CD4-positive, alpha-beta T cell (primary cell): ENCODE measurements at regions of chr17 and their contacts with region 1.

Region 1: DNA sequence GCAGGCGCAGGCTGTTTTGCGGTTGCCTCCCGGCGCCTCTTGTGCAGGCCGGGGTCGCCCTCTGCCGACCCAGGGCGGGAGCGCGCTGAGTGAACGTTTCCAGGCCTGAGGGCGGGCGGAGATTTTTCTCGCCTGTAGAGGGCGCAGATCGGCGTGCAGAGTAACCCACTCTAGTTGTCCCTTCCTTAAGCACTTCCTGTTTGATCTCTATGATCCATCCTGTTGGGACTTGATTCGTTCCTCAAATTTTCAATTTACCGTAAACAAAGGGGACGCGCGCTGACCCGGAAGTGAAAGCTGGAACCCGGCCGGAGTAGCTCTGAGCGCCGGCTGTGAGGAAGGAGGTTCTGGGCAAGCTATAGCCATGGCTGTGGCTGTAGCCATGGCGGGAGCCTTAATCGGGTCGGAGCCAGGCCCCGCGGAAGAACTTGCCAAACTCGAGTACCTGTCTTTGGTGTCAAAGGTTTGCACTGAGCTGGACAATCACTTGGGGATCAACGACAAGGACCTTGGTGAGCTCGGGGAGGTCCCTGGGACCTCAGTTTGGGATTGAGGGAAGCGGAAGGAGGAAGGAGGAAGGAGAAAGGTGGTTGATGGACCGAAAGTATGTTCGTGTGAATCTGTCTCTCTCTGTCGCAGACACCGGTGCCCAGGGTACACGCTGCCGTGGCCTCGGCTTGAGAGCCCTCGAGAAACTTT is at the start of gene DHX8:
- DNase-seq: peak; percentile 95 to 99 (median 99)
- ATAC-seq: peak; percentile 97
- H3K4me3 ChIP-seq: peak within 1 kb of the TSS; percentile 88
- H3K4me3 Mint-ChIP-seq: peak within 1 kb of the TSS; percentile 99
- H3K27ac ChIP-seq: peak within 1 kb of the TSS; percentile 37 to 70
- H3K27ac Mint-ChIP-seq: peak within 1 kb of the TSS; percentile 96
- H3K4me1 ChIP-seq: peaks cover 29% of the 10 kb centered on the region
- H3K4me1 Mint-ChIP-seq: peaks cover 36% of the 10 kb centered on the region
- H3K27me3 ChIP-seq: no peaks in the 10 kb centered on the region
- H3K27me3 Mint-ChIP-seq: no peaks in the 10 kb centered on the region
- CTCF ChIP-seq: peak; percentile 100
- total RNA-seq, gene DHX8: 88.8 to 106 TPM

Region 2: DNA sequence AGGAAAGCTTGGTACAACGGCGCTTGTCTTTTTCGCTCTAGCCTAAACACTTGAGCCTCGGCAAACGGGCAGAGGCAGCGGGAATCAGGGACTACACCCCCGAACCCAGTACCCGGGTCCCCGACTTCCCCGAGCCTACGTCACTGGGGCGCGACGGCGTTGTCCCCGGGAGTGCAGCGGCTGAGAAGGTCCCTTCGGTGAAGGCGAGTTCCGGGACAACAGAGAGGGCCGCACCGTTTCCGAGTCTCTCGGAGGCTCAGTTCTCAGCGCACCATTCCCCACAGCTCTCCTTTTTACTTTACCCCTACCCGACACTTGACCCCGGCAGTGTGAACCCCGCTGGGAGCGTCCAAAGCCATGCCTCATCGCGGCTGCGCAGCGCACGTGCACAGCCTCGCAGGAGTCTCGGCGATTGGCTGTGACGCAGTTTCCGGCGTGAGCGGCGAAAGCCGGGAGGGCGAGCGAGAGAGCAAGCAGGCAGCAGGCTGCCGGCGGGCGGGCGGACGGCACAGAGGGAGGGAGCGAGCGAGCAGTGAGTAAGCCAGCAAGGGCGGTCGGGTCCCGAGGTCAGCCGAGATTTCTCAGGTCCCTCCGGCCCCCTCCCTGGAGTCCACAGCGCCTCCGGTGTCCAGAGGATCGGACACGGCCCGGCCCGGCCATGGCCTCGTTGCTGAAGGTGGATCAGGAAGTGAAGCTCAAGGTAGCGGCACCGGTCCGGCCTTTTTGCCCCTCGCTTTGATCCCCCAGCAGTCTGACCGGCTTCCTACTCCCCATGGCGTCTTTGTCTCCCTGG is 650.7 kb before region 1 on chr17 and contains the start of gene PSME3:
- CTCF ChIA-PET with region 1: interaction called, 3 read pairs
- POLR2A ChIA-PET with region 1: interaction called, 4 read pairs
- intact Hi-C with region 1: loop called in 1 of 2 experiments (anchors 5 kb)
- DNase-seq: peak; percentile 76 to 95 (median 86)
- ATAC-seq: peak; percentile 87
- H3K4me3 ChIP-seq: peak within 1 kb of the TSS; percentile 93
- H3K4me3 Mint-ChIP-seq: peak within 1 kb of the TSS; percentile 95
- H3K27ac ChIP-seq: peak within 1 kb of the TSS; percentile 86 to 88
- H3K27ac Mint-ChIP-seq: peak within 1 kb of the TSS; percentile 98
- H3K4me1 ChIP-seq: peaks cover 24% of the 10 kb centered on the region
- H3K4me1 Mint-ChIP-seq: peaks cover 27% of the 10 kb centered on the region
- H3K27me3 ChIP-seq: no peaks in the 10 kb centered on the region
- H3K27me3 Mint-ChIP-seq: no peaks in the 10 kb centered on the region
- CTCF ChIP-seq: no peak
- total RNA-seq, gene PSME3: 62.1 to 62.5 TPM

Region 3: DNA sequence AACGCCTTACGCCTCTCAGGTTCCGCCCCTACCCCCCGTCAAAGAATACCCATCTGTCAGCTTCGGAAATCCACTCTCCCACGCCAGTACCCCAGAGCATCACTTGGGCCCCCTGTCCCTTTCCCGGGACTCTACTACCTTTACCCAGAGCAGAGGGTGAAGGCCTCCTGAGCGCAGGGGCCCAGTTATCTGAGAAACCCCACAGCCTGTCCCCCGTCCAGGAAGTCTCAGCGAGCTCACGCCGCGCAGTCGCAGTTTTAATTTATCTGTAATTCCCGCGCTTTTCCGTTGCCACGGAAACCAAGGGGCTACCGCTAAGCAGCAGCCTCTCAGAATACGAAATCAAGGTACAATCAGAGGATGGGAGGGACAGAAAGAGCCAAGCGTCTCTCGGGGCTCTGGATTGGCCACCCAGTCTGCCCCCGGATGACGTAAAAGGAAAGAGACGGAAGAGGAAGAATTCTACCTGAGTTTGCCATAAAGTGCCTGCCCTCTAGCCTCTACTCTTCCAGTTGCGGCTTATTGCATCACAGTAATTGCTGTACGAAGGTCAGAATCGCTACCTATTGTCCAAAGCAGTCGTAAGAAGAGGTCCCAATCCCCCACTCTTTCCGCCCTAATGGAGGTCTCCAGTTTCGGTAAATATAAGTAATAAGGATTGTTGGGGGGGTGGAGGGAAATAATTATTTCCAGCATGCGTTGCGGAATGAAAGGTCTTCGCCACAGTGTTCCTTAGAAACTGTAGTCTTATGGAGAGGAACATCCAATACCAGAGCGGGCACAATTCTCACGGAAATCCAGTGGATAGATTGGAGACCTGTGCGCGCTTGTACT is 358.5 kb before region 1 on chr17 and contains the start of gene BRCA1:
- CTCF ChIA-PET with region 1: interaction called, 6 read pairs
- POLR2A ChIA-PET with region 1: interaction called, 3 read pairs
- intact Hi-C with region 1: loop called in 1 of 2 experiments (anchors 2 kb)
- DNase-seq: peak; percentile 86 to 99 (median 90)
- ATAC-seq: peak; percentile 99
- H3K4me3 ChIP-seq: peak within 1 kb of the TSS; percentile 77
- H3K4me3 Mint-ChIP-seq: peak within 1 kb of the TSS; percentile 86
- H3K27ac ChIP-seq: peak within 1 kb of the TSS; percentile 55 to 83
- H3K27ac Mint-ChIP-seq: peak within 1 kb of the TSS; percentile 71
- H3K4me1 ChIP-seq: peaks cover 18% of the 10 kb centered on the region
- H3K4me1 Mint-ChIP-seq: peaks cover 23% of the 10 kb centered on the region
- H3K27me3 ChIP-seq: no peaks in the 10 kb centered on the region
- H3K27me3 Mint-ChIP-seq: no peaks in the 10 kb centered on the region
- CTCF ChIP-seq: no peak
- total RNA-seq, gene BRCA1: 1.2 to 1.3 TPM

Region 4: DNA sequence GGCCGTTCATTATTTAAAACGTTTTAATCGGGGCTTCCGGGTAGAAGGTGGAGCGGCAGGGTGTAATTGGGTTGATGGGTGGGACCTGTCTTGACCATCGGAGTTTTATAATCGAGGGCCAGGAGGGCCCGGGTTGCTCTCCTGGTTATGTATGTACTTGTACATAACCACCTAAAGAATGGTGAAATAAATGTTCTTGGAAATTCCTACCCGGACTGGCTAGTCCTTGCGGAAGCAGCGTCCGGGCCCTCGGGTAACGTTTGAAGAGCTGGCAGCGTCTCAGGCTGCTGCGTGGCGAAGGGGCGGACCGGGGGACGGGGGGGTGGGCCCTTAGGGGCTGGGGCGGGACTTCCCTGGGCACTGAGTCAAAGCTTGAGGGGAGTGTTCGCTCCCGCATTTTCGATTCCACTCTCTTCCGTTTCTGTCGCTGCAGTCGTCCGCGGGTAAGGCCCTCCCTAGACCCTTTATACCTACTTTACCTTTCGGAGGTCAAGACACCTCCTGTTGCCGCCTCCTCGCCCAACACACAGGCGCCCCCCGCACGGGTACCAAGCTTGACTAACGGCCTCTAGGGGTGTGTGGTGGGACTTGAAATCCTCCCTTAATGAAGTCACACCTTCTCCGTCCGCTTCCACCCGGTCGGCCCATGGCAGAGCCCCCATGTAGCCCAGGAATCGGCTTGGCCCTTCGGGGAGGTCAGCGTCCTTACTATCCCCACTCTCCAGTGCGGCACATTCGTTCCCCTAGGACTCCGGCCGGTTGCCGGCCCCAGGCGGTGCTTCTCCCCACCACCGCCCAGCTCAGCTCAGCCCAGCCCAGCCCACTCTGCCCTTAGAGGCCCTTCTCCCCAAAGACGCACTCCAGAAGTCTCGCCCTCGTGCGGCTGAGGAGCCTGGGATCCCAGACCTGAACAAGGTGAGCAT is 272.1 kb before region 1 on chr17 and contains the start of gene TMEM106A:
- CTCF ChIA-PET with region 1: no interaction called
- POLR2A ChIA-PET with region 1: interaction called, 3 read pairs
- intact Hi-C with region 1: loop called in 1 of 2 experiments (anchors 2 kb)
- DNase-seq: peak; percentile 56 to 88 (median 68)
- ATAC-seq: peak; percentile 90
- H3K4me3 ChIP-seq: peak within 1 kb of the TSS; percentile 69
- H3K4me3 Mint-ChIP-seq: peak within 1 kb of the TSS; percentile 98
- H3K27ac ChIP-seq: peak within 1 kb of the TSS; percentile 72 to 77
- H3K27ac Mint-ChIP-seq: peak within 1 kb of the TSS; percentile 89
- H3K4me1 ChIP-seq: peaks cover 22% of the 10 kb centered on the region
- H3K4me1 Mint-ChIP-seq: peaks cover 38% of the 10 kb centered on the region
- H3K27me3 ChIP-seq: no peaks in the 10 kb centered on the region
- H3K27me3 Mint-ChIP-seq: no peaks in the 10 kb centered on the region
- CTCF ChIP-seq: peak; percentile 61
- total RNA-seq, gene TMEM106A: 6.3 to 6.4 TPM

Region 5: DNA sequence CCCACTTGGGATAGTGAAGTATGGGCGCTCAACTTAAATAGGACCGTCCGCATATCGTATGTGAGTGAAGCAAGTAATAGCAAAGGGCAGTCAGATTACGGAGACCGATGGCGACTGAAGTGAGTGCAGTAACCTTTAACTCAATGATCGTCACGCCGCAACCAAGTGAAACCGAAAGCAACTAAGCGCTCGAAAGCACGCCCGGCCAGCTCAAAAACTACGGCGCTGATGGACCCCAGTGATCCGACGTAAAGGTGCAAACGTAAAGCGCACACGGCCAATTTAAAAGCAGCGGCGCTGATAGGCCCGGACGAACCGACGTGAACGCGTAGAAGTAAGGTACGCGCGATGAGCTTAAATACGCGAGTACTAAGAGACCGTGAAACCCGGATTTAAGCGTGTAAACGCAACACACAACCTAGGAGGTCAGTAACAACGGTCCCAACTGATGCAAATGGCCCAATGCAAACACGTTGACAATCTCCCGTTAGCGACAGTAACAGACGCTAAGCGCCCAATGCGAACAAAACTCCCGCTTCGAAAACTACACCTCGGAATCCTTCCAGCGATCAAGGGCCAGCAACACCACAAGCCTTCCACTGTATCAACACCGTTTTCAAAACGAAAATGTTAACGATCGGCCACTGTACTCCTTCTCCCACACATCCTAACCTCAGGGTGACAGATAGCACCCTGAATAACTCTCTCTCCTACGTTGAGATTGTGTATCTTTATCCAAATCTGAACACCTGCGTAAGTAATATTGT is 122.9 kb before region 1 on chr17:
- CTCF ChIA-PET with region 1: interaction called, 20 read pairs
- POLR2A ChIA-PET with region 1: interaction called, 60 read pairs
- intact Hi-C with region 1: no loop called
- DNase-seq: peak; percentile 74 to 99 (median 86)
- ATAC-seq: peak; percentile 75
- H3K4me3 ChIP-seq: peak overlapping the region; percentile 63
- H3K4me3 Mint-ChIP-seq: peak overlapping the region; percentile 93
- H3K27ac ChIP-seq: peak overlapping the region; percentile 94 to 96
- H3K27ac Mint-ChIP-seq: peak overlapping the region; percentile 97
- H3K4me1 ChIP-seq: peaks cover 22% of the 10 kb centered on the region
- H3K4me1 Mint-ChIP-seq: peaks cover 15% of the 10 kb centered on the region
- H3K27me3 ChIP-seq: no peaks in the 10 kb centered on the region
- H3K27me3 Mint-ChIP-seq: peaks cover 5% of the 10 kb centered on the region
- CTCF ChIP-seq: no peak

Region 6: DNA sequence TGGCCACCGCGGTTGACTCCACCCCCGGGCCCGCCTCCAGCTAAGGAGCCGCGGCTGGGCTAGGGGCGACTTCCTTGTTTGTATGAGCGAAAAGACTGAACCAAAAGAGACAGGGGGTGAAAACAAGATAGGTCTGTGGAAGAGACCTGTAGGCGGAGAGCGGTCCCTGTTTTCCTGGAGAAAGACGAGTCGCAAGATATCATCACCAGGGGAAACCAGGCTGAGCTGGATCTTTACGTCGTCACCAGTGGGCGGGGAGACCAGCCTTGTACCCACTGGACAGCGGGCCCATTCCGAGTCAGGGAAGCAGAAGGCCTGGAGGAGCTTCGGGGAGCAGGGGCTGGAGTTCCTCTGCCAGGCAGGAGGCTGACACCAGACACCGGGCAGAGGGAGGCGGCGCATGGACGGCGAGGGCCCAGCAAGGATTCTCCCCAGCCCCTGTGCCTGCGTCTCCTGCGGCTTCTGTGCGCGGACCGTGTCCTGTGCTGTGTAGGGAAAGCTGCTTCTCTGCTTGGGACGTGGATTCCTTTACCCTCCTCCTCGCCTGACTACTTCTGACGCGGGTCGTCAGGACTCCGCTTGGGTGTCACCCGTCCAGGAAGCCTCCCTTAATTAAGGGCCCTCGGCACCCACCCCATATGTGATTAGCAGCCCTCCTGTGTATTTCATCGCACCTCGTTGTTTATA is 95.3 kb before region 1 on chr17:
- CTCF ChIA-PET with region 1: interaction called, 73 read pairs
- POLR2A ChIA-PET with region 1: interaction called, 73 read pairs
- intact Hi-C with region 1: loop called (anchors 1 kb)
- DNase-seq: peak; percentile 84 to 95 (median 90)
- ATAC-seq: peak; percentile 70
- H3K4me3 ChIP-seq: peak overlapping the region; percentile 71
- H3K4me3 Mint-ChIP-seq: peak overlapping the region; percentile 93
- H3K27ac ChIP-seq: peak overlapping the region; percentile 94 to 97
- H3K27ac Mint-ChIP-seq: peak overlapping the region; percentile 97
- H3K4me1 ChIP-seq: peaks cover 27% of the 10 kb centered on the region
- H3K4me1 Mint-ChIP-seq: peaks cover 36% of the 10 kb centered on the region
- H3K27me3 ChIP-seq: no peaks in the 10 kb centered on the region
- H3K27me3 Mint-ChIP-seq: no peaks in the 10 kb centered on the region
- CTCF ChIP-seq: no peak

Region 7: GRCh38 chr17:44014437-44015172 is 530.8 kb after region 1 on chr17 and contains the start of gene TMEM101:
- CTCF ChIA-PET with region 1: interaction called, 5 read pairs
- POLR2A ChIA-PET with region 1: interaction called, 6 read pairs
- intact Hi-C with region 1: loop called (anchors 2 to 10 kb)
- DNase-seq: peak; percentile 81 to 95 (median 86)
- ATAC-seq: peak; percentile 99
- H3K4me3 ChIP-seq: peak within 1 kb of the TSS; percentile 94
- H3K4me3 Mint-ChIP-seq: peak within 1 kb of the TSS; percentile 100
- H3K27ac ChIP-seq: no peak within 1 kb of the TSS
- H3K27ac Mint-ChIP-seq: peak within 1 kb of the TSS; percentile 87
- H3K4me1 ChIP-seq: peaks cover 19% of the 10 kb centered on the region
- H3K4me1 Mint-ChIP-seq: peaks cover 22% of the 10 kb centered on the region
- H3K27me3 ChIP-seq: no peaks in the 10 kb centered on the region
- H3K27me3 Mint-ChIP-seq: peaks cover 5% of the 10 kb centered on the region
- CTCF ChIP-seq: no peak
- total RNA-seq, gene TMEM101: 8.8 to 9.7 TPM